CD4-positive, alpha-beta memory T cell (primary cell): ENCODE measurements at regions of chrX and their contacts with region 1.

Region 1: GRCh38 chrX:30713061-30713525 is 59.9 kb downstream of the GK start:
- DNase-seq: peak; percentile 20 to 37 (median 25)
- H3K4me3 ChIP-seq: no peak overlapping the region
- H3K4me3 Mint-ChIP-seq: peak overlapping the region in 1 of 8 donors; percentile 63
- H3K27ac ChIP-seq: no peak overlapping the region
- H3K27ac Mint-ChIP-seq: peak overlapping the region in 4 of 7 donors; percentile 0 to 75 (median 64)
- H3K4me1 ChIP-seq: peaks cover 13% of the 10 kb centered on the region
- H3K4me1 Mint-ChIP-seq: peaks cover 0 to 8% (median 5%) of the 10 kb centered on the region in 4 donors
- H3K27me3 ChIP-seq: no peaks in the 10 kb centered on the region
- H3K27me3 Mint-ChIP-seq: no peaks in the 10 kb centered on the region

Region 2: DNA sequence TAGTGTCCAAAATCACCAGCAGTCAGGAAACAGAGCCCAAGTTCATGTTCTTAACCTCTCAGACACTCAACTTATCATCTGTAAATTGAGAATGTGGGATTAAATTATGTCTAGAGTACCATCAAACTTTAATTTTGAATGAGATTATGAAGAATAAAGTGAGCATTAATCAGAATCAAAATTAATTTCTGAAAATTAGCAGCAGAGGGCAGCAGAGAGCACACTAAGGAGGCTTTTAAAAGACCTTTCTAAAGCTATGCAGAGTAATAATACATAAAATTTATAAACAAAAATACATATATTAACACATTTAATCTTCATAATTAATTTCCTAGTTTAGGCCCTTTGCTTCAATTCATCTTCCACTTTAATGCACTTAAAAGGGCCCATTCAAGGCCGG is 142.6 kb before region 1 on chrX:
- CTCF ChIA-PET with region 1: interaction called, 34 read pairs
- POLR2A ChIA-PET with region 1: no interaction called
- intact Hi-C with region 1: loop called (anchors 1 kb)
- DNase-seq: peak in 4 of 5 donors; percentile 11 to 27 (median 24)
- H3K4me3 ChIP-seq: no peak overlapping the region
- H3K4me3 Mint-ChIP-seq: no peak overlapping the region
- H3K27ac ChIP-seq: no peak overlapping the region
- H3K27ac Mint-ChIP-seq: no peak overlapping the region
- H3K4me1 ChIP-seq: no peaks in the 10 kb centered on the region
- H3K4me1 Mint-ChIP-seq: peaks cover 7 to 15% (median 9%) of the 10 kb centered on the region in 4 donors
- H3K27me3 ChIP-seq: no peaks in the 10 kb centered on the region
- H3K27me3 Mint-ChIP-seq: no peaks in the 10 kb centered on the region

Region 3: GRCh38 chrX:30635630-30636029 is 77.5 kb before region 1 on chrX:
- CTCF ChIA-PET with region 1: interaction called, 27 read pairs
- POLR2A ChIA-PET with region 1: no interaction called
- intact Hi-C with region 1: loop called (anchors 1 kb)
- DNase-seq: peak in 2 of 5 donors; percentile 7 to 10
- H3K4me3 ChIP-seq: no peak overlapping the region
- H3K4me3 Mint-ChIP-seq: no peak overlapping the region
- H3K27ac ChIP-seq: no peak overlapping the region
- H3K27ac Mint-ChIP-seq: peak overlapping the region in 1 of 7 donors; percentile 30
- H3K4me1 ChIP-seq: no peaks in the 10 kb centered on the region
- H3K4me1 Mint-ChIP-seq: peaks cover 0 to 2% (median 0%) of the 10 kb centered on the region in 4 donors
- H3K27me3 ChIP-seq: no peaks in the 10 kb centered on the region
- H3K27me3 Mint-ChIP-seq: no peaks in the 10 kb centered on the region

Region 4: GRCh38 chrX:31776696-31777095 is 1063.6 kb after region 1 on chrX:
- CTCF ChIA-PET with region 1: no interaction called
- POLR2A ChIA-PET with region 1: no interaction called
- intact Hi-C with region 1: no loop called
- DNase-seq: no peak
- H3K4me3 ChIP-seq: no peak overlapping the region
- H3K4me3 Mint-ChIP-seq: no peak overlapping the region
- H3K27ac ChIP-seq: no peak overlapping the region
- H3K27ac Mint-ChIP-seq: peak overlapping the region in 1 of 7 donors; percentile 43
- H3K4me1 ChIP-seq: no peaks in the 10 kb centered on the region
- H3K4me1 Mint-ChIP-seq: no peaks in the 10 kb centered on the region
- H3K27me3 ChIP-seq: no peaks in the 10 kb centered on the region
- H3K27me3 Mint-ChIP-seq: no peaks in the 10 kb centered on the region